ENCODE measurements at regions of chr15 and their contacts with region 1.

Region 1: GRCh38 chr15:99076552-99077308 is 28.1 kb upstream of the SYNM start:
- DNase-seq: no peak

Region 2: GRCh38 chr15:98442379-98442833 is 634.3 kb before region 1 on chr15:
- intact Hi-C with region 1: loop called (anchors 5 kb)
- DNase-seq: no peak

Region 3: DNA sequence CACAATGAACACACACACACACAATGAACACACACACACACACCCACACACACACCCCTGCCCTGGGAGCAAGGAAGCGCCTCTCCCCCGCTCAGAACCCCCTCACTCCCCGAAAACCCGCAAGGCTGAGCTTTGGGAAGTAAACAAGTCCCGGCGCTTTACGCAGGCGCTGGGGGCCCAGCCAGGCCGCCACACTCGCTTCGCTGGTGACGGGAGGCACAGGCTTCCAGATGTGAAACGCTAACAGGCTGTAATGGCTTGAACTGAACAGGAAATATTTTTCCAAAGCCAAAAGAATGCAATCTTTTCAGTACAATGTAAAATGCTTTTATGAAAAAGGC is 551.1 kb before region 1 on chr15:
- intact Hi-C with region 1: loop called (anchors 5 kb)
- DNase-seq: no peak

Region 4: GRCh38 chr15:98779463-98780071 is 297.2 kb before region 1 on chr15:
- intact Hi-C with region 1: loop called (anchors 5 kb)
- DNase-seq: peak; percentile 90

Measured in cardiac septum (tissue), 1 donor.